Heart left ventricle (tissue), 16 donors: ENCODE measurements at regions of chr2 and their contacts with region 1.

Region 1: GRCh38 chr2:189115126-189115525 is 64.4 kb downstream of the COL5A2 start:
- DNase-seq: no peak
- ATAC-seq: no peak
- H3K4me3 ChIP-seq: no peak overlapping the region
- H3K27ac ChIP-seq: no peak overlapping the region
- H3K4me1 ChIP-seq: peaks cover 0 to 15% (median 0%) of the 10 kb centered on the region in 12 donors
- H3K27me3 ChIP-seq: no peaks in the 10 kb centered on the region
- CTCF ChIP-seq: peak in 7 of 12 donors; percentile 16 to 46 (median 36)
- POLR2A ChIP-seq: no peak

Region 2: DNA sequence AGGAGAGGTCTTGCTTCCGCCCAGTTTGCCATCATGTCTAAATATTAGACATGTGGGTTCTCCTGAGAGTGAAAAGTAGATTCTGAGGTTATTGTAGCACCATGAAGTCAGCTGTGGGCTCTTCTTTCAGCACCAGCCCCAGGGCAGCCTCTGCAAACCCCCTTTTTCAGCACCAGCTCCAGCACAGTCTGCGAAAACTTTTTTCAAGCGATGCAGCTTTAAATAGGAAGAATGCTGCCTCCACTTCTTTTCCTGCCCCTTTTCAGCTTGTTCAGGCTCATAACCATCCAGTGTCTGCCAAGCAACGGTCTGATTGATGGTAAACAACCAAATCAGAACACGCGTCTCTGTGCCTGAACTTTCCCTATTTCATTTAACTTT is 64.4 kb after region 1 on chr2 and contains the start of gene COL5A2:
- intact Hi-C with region 1: loop called in 2 of 10 experiments (anchors 5 to 10 kb)
- DNase-seq: peak; percentile 29 to 61 (median 37)
- ATAC-seq: peak; percentile 56 to 89 (median 89)
- H3K4me3 ChIP-seq: peak within 1 kb of the TSS; percentile 5 to 75 (median 54)
- H3K27ac ChIP-seq: peak within 1 kb of the TSS; percentile 48 to 83 (median 72)
- H3K4me1 ChIP-seq: peaks cover 0 to 6% (median 0%) of the 10 kb centered on the region in 12 donors
- H3K27me3 ChIP-seq: no peaks in the 10 kb centered on the region
- CTCF ChIP-seq: no peak
- POLR2A ChIP-seq: peak in 1 of 2 donors; percentile 27
- total RNA-seq, gene COL5A2: 7.2 to 61.1 (median 12.4) TPM

Region 3: GRCh38 chr2:189444322-189444721 is 329.2 kb after region 1 on chr2:
- intact Hi-C with region 1: no loop called
- DNase-seq: no peak
- ATAC-seq: no peak
- H3K4me3 ChIP-seq: no peak overlapping the region
- H3K27ac ChIP-seq: no peak overlapping the region
- H3K4me1 ChIP-seq: peaks cover 0 to 45% (median 14%) of the 10 kb centered on the region in 12 donors
- H3K27me3 ChIP-seq: no peaks in the 10 kb centered on the region
- CTCF ChIP-seq: no peak
- POLR2A ChIP-seq: no peak